H1 (cell line): ENCODE measurements at regions of chr6 and their contacts with region 1.

Region 1: GRCh38 chr6:75208298-75209183 is 2.7 kb upstream of the COL12A1 start:
- DNase-seq: peak in 1 of 2 experiments; percentile 96
- H3K4me3 ChIP-seq: peak overlapping the region; percentile 55 to 77 (median 66); a peak in 7 of 8 replicates
- H3K27ac ChIP-seq: no peak overlapping the region
- H3K4me1 ChIP-seq: peaks cover 5 to 26% (median 12%) of the 10 kb centered on the region in 4 experiments; a peak in 6 of 7 replicates
- H3K27me3 ChIP-seq: peaks cover 34 to 54% (median 51%) of the 10 kb centered on the region in 4 experiments
- CTCF ChIP-seq: peak; percentile 71 to 92 (median 91)
- EP300 ChIP-seq: no peak
- POLR2A ChIP-seq: no peak
- RAD21 ChIP-seq: peak; percentile 97 to 99

Region 2: GRCh38 chr6:73675466-73676098 is 1533.0 kb before region 1 on chr6:
- CTCF ChIA-PET with region 1: interaction called, 12 read pairs
- POLR2A ChIA-PET with region 1: no interaction called
- DNase-seq: peak in 1 of 2 experiments; percentile 87
- H3K4me3 ChIP-seq: no peak overlapping the region
- H3K27ac ChIP-seq: no peak overlapping the region
- H3K4me1 ChIP-seq: no peaks in the 10 kb centered on the region
- H3K27me3 ChIP-seq: no peaks in the 10 kb centered on the region
- CTCF ChIP-seq: peak; percentile 75 to 96 (median 87)
- EP300 ChIP-seq: no peak
- POLR2A ChIP-seq: no peak
- RAD21 ChIP-seq: peak; percentile 83 to 89

Region 3: GRCh38 chr6:73985891-73986290 is 1222.7 kb before region 1 on chr6:
- CTCF ChIA-PET with region 1: interaction called, 14 read pairs
- POLR2A ChIA-PET with region 1: no interaction called
- DNase-seq: peak in 1 of 2 experiments; percentile 7
- H3K4me3 ChIP-seq: no peak overlapping the region
- H3K27ac ChIP-seq: no peak overlapping the region
- H3K4me1 ChIP-seq: no peaks in the 10 kb centered on the region
- H3K27me3 ChIP-seq: no peaks in the 10 kb centered on the region
- CTCF ChIP-seq: peak; percentile 59 to 80 (median 60)
- EP300 ChIP-seq: no peak
- POLR2A ChIP-seq: no peak
- RAD21 ChIP-seq: peak; percentile 60 to 68

Region 4: GRCh38 chr6:74899416-74899815 is 309.1 kb before region 1 on chr6:
- CTCF ChIA-PET with region 1: interaction called, 17 read pairs
- POLR2A ChIA-PET with region 1: no interaction called
- DNase-seq: no peak
- H3K4me3 ChIP-seq: no peak overlapping the region
- H3K27ac ChIP-seq: no peak overlapping the region
- H3K4me1 ChIP-seq: no peaks in the 10 kb centered on the region
- H3K27me3 ChIP-seq: no peaks in the 10 kb centered on the region
- CTCF ChIP-seq: peak in 2 of 3 experiments; percentile 39 to 47; a peak in 3 of 4 replicates
- EP300 ChIP-seq: no peak
- POLR2A ChIP-seq: no peak
- RAD21 ChIP-seq: peak; percentile 70 to 73

Region 5: DNA sequence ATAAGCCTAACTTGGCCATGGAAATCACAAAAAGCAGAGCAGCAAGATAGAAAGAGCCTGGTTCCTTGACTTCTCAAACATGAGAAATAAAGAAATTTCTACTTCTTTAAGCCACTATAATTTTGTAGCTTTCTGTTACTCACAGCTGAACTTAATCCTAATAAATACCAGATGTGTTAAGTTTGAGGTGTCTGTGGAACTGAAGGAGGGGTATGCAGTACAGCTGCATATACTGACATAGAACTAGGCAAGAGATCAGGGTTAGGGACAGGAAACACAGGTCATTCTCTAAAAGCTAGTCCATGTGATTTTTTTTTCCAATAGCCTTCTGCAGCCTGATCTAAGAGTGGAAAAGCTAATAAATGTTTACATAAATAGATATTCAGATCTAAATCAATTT is 126.6 kb before region 1 on chr6:
- CTCF ChIA-PET with region 1: interaction called, 10 read pairs
- POLR2A ChIA-PET with region 1: no interaction called
- DNase-seq: no peak
- H3K4me3 ChIP-seq: no peak overlapping the region
- H3K27ac ChIP-seq: no peak overlapping the region
- H3K4me1 ChIP-seq: peaks cover 0 to 12% (median 2%) of the 10 kb centered on the region in 4 experiments; a peak in 3 of 7 replicates
- H3K27me3 ChIP-seq: peaks cover 0 to 3% (median under 1%) of the 10 kb centered on the region in 4 experiments; a peak in 6 of 7 replicates
- CTCF ChIP-seq: no peak
- EP300 ChIP-seq: no peak
- POLR2A ChIP-seq: no peak
- RAD21 ChIP-seq: no peak

Region 6: DNA sequence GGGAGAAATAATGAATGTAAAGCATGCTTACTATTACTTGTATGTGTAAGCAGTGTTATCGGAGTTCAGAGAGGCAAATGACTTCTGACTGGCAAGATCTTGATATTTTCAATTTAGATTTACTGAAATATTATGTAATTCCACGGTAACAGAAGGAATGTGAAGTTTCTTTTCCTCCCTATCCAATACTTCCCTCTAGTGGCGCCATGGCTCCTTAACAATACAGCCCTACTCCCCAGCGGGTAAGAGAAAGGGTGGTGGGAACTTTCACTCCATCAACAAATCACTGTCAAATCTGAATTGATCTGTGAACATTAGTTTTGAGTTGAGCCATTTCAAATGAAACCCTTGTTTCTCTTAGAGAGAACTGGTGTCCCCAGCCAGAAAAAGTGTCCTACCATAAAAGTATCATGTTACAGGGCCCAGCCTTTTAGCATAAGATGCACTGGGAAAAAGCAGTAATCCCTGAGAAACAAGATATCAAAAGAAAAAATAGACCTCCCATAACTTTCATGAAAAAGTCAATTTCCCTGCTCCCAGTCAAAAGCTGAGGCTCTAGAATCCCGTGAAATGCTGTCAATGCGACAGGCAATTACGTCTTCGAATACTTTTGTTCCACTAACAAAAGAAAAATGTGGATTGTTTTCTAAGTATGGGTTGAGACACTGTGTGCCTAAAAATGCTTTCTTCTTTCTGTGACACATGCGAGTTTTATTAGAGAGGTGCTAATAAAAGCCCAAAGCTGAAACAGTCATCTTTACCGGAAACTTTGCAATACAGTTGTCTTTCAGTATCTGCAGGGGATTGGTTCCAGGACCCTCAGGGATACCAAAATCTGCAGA is 22.2 kb after region 1 on chr6:
- CTCF ChIA-PET with region 1: interaction called, 48 read pairs
- POLR2A ChIA-PET with region 1: interaction called, 3 read pairs
- DNase-seq: no peak
- H3K4me3 ChIP-seq: no peak overlapping the region
- H3K27ac ChIP-seq: no peak overlapping the region
- H3K4me1 ChIP-seq: peaks cover 0 to 6% (median 4%) of the 10 kb centered on the region in 4 experiments; a peak in 3 of 7 replicates
- H3K27me3 ChIP-seq: peaks cover 0 to 1% (median 0%) of the 10 kb centered on the region in 4 experiments; a peak in 1 of 7 replicates
- CTCF ChIP-seq: peak; percentile 22 to 81 (median 49)
- EP300 ChIP-seq: no peak
- POLR2A ChIP-seq: no peak
- RAD21 ChIP-seq: peak; percentile 84 to 87

Region 7: DNA sequence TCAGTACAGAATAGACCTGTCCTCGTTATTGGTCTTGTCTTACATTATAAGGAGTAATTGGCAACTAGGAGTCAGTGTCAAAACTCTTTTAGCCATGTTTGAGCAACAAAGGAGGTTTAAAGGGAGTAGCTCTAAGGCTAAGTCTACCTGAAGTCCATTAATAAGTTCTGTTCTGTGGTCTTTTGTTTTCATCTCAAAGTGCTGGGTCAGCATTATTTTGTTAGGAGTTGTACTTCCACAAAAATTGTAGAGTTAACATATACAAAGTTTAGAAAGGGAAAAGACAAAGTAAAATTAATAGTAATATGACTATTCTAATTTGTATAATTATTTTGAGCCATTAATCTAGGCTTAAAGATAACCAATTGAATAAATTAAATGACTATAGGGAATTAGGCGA is 380.4 kb after region 1 on chr6:
- CTCF ChIA-PET with region 1: no interaction called
- POLR2A ChIA-PET with region 1: no interaction called
- DNase-seq: no peak
- H3K4me3 ChIP-seq: no peak overlapping the region
- H3K27ac ChIP-seq: no peak overlapping the region
- H3K4me1 ChIP-seq: no peaks in the 10 kb centered on the region
- H3K27me3 ChIP-seq: no peaks in the 10 kb centered on the region
- CTCF ChIP-seq: no peak
- EP300 ChIP-seq: no peak
- POLR2A ChIP-seq: no peak
- RAD21 ChIP-seq: no peak